ENCODE measurements at regions of chr20 and their contacts with region 1.

Region 1: GRCh38 chr20:33719989-33720709 is at the start of gene PXMP4:
- H3K4me3 ChIP-seq: peak within 1 kb of the TSS; percentile 53
- H3K27ac ChIP-seq: no peak within 1 kb of the TSS; the same call in 1 of the 2 replicates
- H3K4me1 ChIP-seq: no peaks in the 10 kb centered on the region
- CTCF ChIP-seq: no peak

Region 2: GRCh38 chr20:33693741-33694638 is 26.2 kb before region 1 on chr20:
- CTCF ChIA-PET with region 1: no interaction called
- POLR2A ChIA-PET with region 1: no interaction called
- H3K4me3 ChIP-seq: no peak overlapping the region
- H3K27ac ChIP-seq: no peak overlapping the region
- H3K4me1 ChIP-seq: no peaks in the 10 kb centered on the region
- CTCF ChIP-seq: no peak

Region 3: DNA sequence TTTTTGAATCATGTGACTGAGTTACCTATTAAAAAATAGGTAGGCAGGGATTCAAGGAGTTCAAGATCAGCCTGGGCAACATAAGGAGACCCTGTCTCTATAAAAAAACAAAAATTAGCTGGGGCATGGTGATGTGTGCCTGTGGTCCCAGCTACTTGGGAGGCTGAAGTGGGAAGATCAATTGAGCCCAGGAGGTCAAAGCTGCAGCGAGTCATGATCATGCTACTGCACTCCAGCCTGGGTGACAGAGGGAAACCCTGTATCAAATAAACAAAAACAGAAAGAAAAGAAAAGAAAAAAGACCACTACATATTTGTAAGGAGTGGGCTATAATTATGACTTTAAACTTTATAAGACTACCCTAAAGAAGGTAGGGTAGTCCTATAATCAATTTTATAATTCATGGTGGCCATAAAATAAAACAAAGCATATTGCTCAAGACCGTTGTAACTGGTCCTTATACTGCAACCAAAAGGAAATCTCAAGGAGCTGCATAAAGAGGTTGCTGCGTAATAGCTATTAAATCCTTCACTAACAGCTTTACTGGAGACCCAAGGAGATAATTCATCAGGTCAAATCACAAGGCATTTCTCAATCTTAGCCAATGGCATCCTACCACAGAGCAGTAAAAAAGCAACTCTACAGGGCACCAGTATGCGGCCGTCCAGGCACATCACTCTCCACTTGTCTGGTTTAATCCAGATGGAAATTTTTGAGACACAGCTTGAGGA is 943.2 kb after region 1 on chr20:
- CTCF ChIA-PET with region 1: no interaction called
- POLR2A ChIA-PET with region 1: interaction called, 12 read pairs
- H3K4me3 ChIP-seq: no peak overlapping the region
- H3K27ac ChIP-seq: no peak overlapping the region
- H3K4me1 ChIP-seq: peaks cover 3% of the 10 kb centered on the region; the same call in 1 of the 2 replicates
- CTCF ChIP-seq: no peak

Measured in HEK293 (cell line).